ENCODE measurements at regions of chr20 and their contacts with region 1.

Region 1: GRCh38 chr20:561437-562231 is 18.0 kb upstream of the CSNK2A1 start:
- DNase-seq: peak; percentile 71

Region 2: DNA sequence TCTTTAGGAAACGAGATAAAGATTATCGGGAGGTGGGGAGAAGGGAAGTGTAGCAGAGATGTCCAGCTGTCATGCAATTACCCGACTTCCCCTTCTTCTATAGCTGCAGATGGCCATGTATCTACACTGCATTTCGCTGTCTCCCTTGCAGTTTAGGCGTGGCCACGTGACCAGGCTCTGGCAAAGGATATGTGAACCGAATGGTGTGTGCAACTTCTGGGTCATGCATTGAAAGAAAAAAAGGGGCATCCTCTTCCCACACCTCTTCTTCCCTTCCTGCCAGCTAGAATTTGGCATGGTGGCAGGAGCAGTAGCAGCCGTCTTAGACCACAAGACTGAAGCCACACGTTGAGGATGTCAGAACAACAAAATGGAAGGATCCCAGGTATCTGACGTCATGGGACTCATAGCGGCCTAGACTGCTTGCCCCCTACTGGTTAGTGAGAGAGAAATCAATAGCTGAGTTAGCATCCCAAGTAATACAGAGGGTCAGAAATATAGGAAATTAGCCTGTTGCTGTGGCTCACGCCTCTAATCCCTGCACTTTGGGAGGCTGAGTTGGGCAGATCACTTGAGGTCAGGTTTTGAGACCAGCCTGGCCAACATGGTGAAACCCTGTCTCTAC is 15.6 kb after region 1 on chr20:
- intact Hi-C with region 1: no loop called
- DNase-seq: peak; percentile 31

Region 3: GRCh38 chr20:667391-667964 is 105.8 kb after region 1 on chr20:
- intact Hi-C with region 1: loop called in 1 of 2 experiments (anchors 10 kb)
- DNase-seq: peak; percentile 87

Region 4: DNA sequence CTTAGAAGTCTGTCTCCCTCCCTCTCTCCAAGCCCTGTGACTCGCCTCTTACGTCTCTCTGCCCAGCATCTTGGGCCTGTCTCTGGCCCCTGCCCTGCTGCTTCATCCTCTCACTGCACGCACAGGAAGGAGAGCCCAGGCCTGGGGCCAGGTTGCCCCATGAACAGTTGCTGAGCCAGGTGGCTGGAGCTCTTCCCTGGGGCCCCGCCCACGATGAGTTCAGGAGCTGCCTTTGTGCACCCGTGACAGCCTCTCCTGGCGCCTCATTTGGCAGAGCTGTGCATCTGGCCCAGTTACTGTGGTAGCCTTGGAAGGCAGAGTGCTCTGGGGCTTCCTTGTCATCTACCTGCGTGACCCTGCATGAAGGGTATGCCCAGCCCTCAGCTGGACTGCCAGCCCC is 162.1 kb after region 1 on chr20:
- intact Hi-C with region 1: loop called in 1 of 2 experiments (anchors 5 kb)
- DNase-seq: peak; percentile 54

Region 5: GRCh38 chr20:733861-734260 is 172.2 kb after region 1 on chr20:
- intact Hi-C with region 1: loop called in 1 of 2 experiments (anchors 10 kb)
- DNase-seq: peak; percentile 65

Region 6: GRCh38 chr20:740141-740540 is 178.5 kb after region 1 on chr20:
- intact Hi-C with region 1: loop called (anchors 5 to 10 kb)
- DNase-seq: no peak